Activated CD8-positive, alpha-beta T cell treated with anti-CD3 and anti-CD28 coated beads for 36 hours (primary cell): ENCODE measurements at regions of chr18 and their contacts with region 1.

Region 1: DNA sequence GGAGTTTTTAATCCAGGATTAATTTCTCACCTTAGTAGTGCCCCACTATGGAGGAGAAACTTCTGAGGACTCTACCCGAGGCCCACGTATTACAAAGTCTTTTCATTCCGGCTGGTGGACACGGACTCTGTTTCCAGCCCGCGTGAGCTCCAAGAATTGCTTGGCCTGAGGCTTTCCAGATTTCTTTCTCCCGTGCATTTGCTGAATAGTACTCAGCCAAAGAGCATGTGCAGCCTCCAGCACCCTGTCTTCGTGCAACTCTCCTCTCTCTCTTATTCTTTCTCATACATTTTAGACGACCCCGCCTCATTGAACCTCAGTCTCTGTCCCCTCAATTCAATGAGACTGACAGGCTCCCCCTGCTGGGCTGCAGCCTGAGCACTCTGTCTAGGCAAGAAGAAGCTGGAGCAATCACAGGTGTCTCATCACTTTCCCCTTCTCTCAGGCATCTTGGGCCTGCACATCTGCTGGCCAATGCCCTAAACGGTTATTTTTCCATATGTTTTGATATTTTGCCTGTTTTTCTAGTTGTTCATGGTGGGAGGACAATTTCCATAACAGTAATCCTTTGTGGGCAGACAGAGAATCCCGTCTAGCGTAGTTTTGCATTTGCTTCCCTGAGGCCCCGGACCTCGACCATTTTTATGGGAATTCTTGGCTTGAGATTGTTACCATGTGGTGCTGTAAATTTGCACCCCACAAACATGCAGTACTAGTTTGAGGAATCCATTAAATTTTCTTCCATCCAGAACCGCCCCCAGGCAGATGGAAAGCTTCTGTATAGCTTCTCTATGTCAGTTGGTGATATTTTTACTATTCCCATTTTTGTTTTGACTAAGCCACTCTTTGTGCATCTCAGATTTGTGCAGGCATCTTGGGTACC is 50.1 kb upstream of the LPIN2 start:
- DNase-seq: peak; percentile 88
- ATAC-seq: peak; percentile 32
- H3K4me3 Mint-ChIP-seq: peak overlapping the region; percentile 43
- H3K27ac Mint-ChIP-seq: peak overlapping the region; percentile 100
- H3K4me1 Mint-ChIP-seq: peaks cover 64% of the 10 kb centered on the region
- H3K27me3 Mint-ChIP-seq: no peaks in the 10 kb centered on the region
- CTCF ChIP-seq: peak; percentile 92

Region 2: DNA sequence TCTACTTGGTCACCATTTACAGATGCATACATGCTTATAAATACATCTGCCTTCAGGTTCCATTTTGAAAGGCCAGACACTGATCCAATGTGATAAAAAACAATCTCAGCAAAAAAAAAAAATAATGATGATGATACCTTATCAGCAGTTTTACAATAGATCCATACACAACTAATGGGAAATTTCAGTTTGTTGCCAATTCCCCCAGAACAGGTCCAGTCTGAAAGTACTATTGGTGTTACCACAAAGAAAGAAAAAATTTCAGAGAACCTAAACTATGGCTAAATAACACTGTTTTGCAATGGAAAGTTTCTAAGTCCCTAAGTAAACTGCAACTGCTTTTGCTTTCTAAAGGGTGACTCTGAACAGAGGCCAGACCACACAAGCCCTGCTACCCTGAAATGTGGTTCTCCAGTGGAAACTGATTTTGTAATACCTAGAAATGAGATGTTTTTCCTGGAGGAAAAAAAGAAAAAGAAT is 104.2 kb before region 1 on chr18:
- CTCF ChIA-PET with region 1: interaction called, 25 read pairs
- POLR2A ChIA-PET with region 1: interaction called, 8 read pairs
- intact Hi-C with region 1: loop called (anchors 5 kb)
- DNase-seq: peak; percentile 76
- ATAC-seq: peak; percentile 28
- H3K4me3 Mint-ChIP-seq: peak overlapping the region; percentile 65
- H3K27ac Mint-ChIP-seq: peak overlapping the region; percentile 99
- H3K4me1 Mint-ChIP-seq: peaks cover 84% of the 10 kb centered on the region
- H3K27me3 Mint-ChIP-seq: no peaks in the 10 kb centered on the region
- CTCF ChIP-seq: no peak

Region 3: GRCh38 chr18:3002732-3003131 is 60.3 kb before region 1 on chr18:
- CTCF ChIA-PET with region 1: interaction called, 133 read pairs
- POLR2A ChIA-PET with region 1: interaction called, 41 read pairs
- intact Hi-C with region 1: no loop called
- DNase-seq: no peak
- ATAC-seq: no peak
- H3K4me3 Mint-ChIP-seq: no peak overlapping the region
- H3K27ac Mint-ChIP-seq: peak overlapping the region; percentile 5
- H3K4me1 Mint-ChIP-seq: peaks cover 62% of the 10 kb centered on the region
- H3K27me3 Mint-ChIP-seq: no peaks in the 10 kb centered on the region
- CTCF ChIP-seq: no peak

Region 4: GRCh38 chr18:3044894-3045698 is 17.9 kb before region 1 on chr18:
- CTCF ChIA-PET with region 1: interaction called, 20 read pairs
- POLR2A ChIA-PET with region 1: interaction called, 5 read pairs
- intact Hi-C with region 1: no loop called
- DNase-seq: no peak
- ATAC-seq: no peak
- H3K4me3 Mint-ChIP-seq: no peak overlapping the region
- H3K27ac Mint-ChIP-seq: no peak overlapping the region
- H3K4me1 Mint-ChIP-seq: peaks cover 19% of the 10 kb centered on the region
- H3K27me3 Mint-ChIP-seq: no peaks in the 10 kb centered on the region
- CTCF ChIP-seq: no peak

Region 5: DNA sequence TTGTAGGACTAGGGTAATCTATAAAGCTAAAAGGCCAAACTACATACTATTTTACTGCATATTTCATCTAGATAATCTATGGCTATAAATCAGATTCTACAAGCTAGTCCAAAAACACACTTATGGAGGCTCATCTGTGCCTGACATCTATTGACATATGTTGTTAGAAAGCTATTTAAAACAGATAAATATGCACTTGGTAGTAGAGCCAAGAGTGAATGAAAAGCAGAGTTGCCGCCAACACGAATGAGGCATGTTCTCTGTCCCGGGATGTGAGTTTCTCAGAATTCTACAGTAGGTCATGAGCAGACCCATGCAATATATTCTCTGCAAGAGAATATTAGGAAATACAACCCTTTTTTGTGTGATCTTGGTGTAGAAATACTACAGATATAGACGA is 16.6 kb after region 1 on chr18:
- CTCF ChIA-PET with region 1: interaction called, 56 read pairs
- POLR2A ChIA-PET with region 1: interaction called, 3 read pairs
- intact Hi-C with region 1: no loop called
- DNase-seq: no peak
- ATAC-seq: no peak
- H3K4me3 Mint-ChIP-seq: no peak overlapping the region
- H3K27ac Mint-ChIP-seq: no peak overlapping the region
- H3K4me1 Mint-ChIP-seq: peaks cover 9% of the 10 kb centered on the region
- H3K27me3 Mint-ChIP-seq: no peaks in the 10 kb centered on the region
- CTCF ChIP-seq: no peak

Region 6: DNA sequence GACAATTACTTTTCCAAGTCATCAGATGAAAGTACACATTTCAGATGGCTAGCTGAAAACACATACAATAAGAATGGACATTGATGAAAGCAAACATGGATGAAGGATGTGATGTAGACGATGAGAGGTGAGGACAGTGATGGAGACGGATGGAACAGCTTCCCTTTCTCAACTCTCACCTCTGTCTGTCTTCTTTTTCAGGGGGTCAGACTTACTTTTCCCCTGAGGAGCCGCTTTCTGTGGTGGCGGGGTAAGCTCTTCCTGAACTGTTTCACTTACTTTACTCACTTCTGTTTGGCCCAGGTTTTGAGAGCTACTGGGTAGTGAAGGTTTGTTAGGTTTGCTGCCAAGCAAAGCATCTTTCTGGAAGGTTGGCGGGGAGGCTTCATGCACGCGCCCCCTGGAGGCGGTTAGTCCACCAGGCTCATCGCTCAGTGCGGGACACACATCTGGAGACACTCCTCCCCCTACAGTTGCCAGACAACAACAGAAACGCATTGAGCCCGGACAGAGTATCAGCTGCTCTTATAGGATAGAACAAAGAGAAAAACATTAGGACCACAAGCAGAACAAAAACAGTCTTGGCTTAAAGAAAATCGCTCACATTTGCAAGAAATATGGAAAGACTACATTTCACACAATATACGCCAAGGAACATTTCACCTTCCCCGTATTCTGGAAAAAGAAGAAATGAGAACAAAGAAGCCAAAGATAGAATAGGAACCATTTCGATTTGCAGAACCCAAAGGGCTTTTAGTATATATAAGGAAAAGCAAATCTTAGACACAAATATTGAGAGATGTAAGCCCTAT is 66.2 kb after region 1 on chr18:
- CTCF ChIA-PET with region 1: interaction called, 30 read pairs
- POLR2A ChIA-PET with region 1: interaction called, 5 read pairs
- intact Hi-C with region 1: loop called (anchors 5 kb)
- DNase-seq: peak; percentile 92
- ATAC-seq: peak; percentile 99
- H3K4me3 Mint-ChIP-seq: no peak overlapping the region
- H3K27ac Mint-ChIP-seq: peak overlapping the region; percentile 14
- H3K4me1 Mint-ChIP-seq: peaks cover 9% of the 10 kb centered on the region
- H3K27me3 Mint-ChIP-seq: no peaks in the 10 kb centered on the region
- CTCF ChIP-seq: peak; percentile 76

Region 7: GRCh38 chr18:3401669-3402626 is 338.9 kb after region 1 on chr18:
- CTCF ChIA-PET with region 1: no interaction called
- POLR2A ChIA-PET with region 1: no interaction called
- intact Hi-C with region 1: no loop called
- DNase-seq: no peak
- ATAC-seq: no peak
- H3K4me3 Mint-ChIP-seq: no peak overlapping the region
- H3K27ac Mint-ChIP-seq: no peak overlapping the region
- H3K4me1 Mint-ChIP-seq: peaks cover 17% of the 10 kb centered on the region
- H3K27me3 Mint-ChIP-seq: no peaks in the 10 kb centered on the region
- CTCF ChIP-seq: no peak